HCT116 (cell line): ENCODE measurements at regions of chr6 and their contacts with region 1.

Region 1: GRCh38 chr6:131615275-131615674 is 12.8 kb downstream of the MED23 start:
- DNase-seq: no peak
- ATAC-seq: no peak
- H3K4me3 ChIP-seq: no peak overlapping the region
- H3K27ac ChIP-seq: no peak overlapping the region
- H3K4me1 ChIP-seq: no peaks in the 10 kb centered on the region
- H3K27me3 ChIP-seq: no peaks in the 10 kb centered on the region
- CTCF ChIP-seq: no peak
- POLR2A ChIP-seq: no peak
- RAD21 ChIP-seq: no peak

Region 2: DNA sequence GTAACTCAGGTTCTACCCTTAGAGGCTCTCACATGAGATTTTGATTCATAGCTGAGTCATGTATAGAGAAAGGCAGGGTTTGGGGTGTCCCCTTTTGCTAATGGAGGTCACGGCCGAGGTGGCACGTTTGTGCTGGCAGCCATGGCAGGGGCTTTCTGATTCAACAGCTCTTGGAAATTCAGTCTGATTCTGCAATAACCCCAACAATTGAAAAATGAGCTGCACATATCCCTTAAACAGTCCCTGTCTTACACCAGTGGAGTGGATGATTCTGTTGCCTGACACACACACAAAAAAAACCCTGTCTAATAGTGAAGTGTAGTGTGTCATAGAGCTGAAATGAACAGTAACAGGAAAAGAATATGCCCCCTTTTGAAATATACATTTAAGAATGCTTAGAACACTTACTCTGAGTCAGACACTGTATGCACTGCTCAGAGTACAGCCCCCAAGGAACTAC is 82.7 kb before region 1 on chr6:
- CTCF ChIA-PET with region 1: no interaction called
- POLR2A ChIA-PET with region 1: no interaction called
- RAD21 ChIA-PET with region 1: no interaction called
- intact Hi-C with region 1: no loop called
- DNase-seq: no peak
- ATAC-seq: no peak
- H3K4me3 ChIP-seq: no peak overlapping the region
- H3K27ac ChIP-seq: no peak overlapping the region
- H3K4me1 ChIP-seq: no peaks in the 10 kb centered on the region
- H3K27me3 ChIP-seq: no peaks in the 10 kb centered on the region
- CTCF ChIP-seq: no peak
- POLR2A ChIP-seq: no peak
- RAD21 ChIP-seq: no peak

Region 3: DNA sequence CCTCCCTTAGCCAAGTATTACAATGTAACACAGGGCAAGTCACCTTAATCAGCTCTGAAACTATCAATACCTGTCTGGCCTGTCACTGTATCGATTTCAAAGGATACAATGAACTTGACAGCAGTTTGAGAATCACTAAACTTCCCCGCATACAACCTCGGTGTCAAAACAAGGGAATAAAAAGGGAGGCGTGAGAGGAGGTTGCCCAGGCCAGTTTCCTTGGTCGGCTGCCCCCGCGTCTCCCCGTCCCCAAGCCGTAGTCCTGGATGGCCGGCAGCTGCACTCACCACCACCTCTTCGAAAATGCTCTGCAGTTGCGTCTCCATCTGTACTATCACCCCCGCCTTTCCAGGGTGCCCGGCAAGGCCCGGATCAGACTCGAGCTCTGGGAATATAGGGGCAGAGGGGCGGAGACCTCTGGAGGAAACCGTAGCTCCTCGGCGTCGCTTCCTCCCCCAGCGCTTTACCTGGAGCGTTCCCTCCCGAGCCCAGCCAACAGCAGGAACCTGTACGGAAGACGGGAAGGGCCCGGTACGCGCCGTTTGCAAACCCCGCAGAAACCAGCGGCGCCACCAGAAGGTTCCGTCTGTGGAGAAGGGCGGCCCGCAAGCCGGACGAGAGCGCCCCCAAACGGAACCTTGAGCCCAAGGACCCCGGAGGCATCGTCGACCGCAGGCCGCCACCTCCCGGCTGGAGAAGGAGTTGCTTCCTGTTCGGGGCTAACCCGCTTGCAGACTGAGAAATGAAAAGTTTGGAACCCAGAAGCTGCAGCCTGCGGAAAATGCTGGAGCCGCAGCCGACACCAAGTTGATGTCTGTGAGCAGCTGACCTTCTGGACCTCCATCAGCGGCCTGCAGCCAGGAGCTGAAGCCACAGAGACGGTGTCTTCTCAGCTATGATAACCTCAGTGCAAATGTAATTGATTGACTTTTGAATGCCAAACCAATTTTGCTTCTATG is 12.7 kb after region 1 on chr6 and contains the start of gene MED23:
- CTCF ChIA-PET with region 1: interaction called, 15 read pairs
- POLR2A ChIA-PET with region 1: interaction called, 7 read pairs
- RAD21 ChIA-PET with region 1: no interaction called
- intact Hi-C with region 1: no loop called
- DNase-seq: peak; percentile 92
- ATAC-seq: peak; percentile 96
- H3K4me3 ChIP-seq: peak within 1 kb of the TSS; percentile 77 to 94
- H3K27ac ChIP-seq: peak within 1 kb of the TSS; percentile 73
- H3K4me1 ChIP-seq: peaks cover 5 to 15% of the 10 kb centered on the region in 2 experiments
- H3K27me3 ChIP-seq: no peaks in the 10 kb centered on the region
- CTCF ChIP-seq: peak; percentile 98 to 100 (median 98)
- POLR2A ChIP-seq: no peak
- RAD21 ChIP-seq: peak; percentile 86
- total RNA-seq, gene MED23: 17.2 TPM